Posterior vena cava (tissue), 2 donors: ENCODE measurements at regions of chr12 and their contacts with region 1.

Region 1: GRCh38 chr12:24470050-24470449 is 478.9 kb downstream of the BCAT1 start:
- DNase-seq: no peak

Region 2: GRCh38 chr12:24425601-24425970 is 44.5 kb before region 1 on chr12:
- intact Hi-C with region 1: loop called in 1 of 2 experiments (anchors 1 kb)
- DNase-seq: no peak

Region 3: DNA sequence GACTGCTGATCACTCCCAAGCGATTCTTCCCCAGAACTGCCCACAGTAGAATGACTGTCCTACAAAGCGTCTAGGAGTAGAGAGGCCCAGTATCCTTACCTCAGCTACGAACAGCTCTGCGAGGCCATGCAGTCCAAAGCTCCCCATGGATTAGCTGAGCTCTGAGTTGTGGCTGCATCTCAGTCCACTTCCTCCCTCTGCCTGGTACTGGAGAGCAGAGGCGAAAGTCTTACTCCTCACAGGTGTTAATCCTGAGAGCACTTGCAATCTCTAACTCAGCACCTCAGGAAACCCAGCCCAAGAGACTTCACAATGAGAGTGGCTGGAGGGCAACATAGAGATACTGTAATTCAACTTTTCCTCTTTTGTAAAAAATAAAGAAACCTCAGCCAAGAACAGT is 14.2 kb before region 1 on chr12:
- intact Hi-C with region 1: no loop called
- DNase-seq: no peak